Ovary (tissue), 10 donors: ENCODE measurements at regions of chr19 and their contacts with region 1.

Region 1: GRCh38 chr19:17292286-17293097 is 10.7 kb downstream of the ABHD8 start:
- DNase-seq: peak; percentile 60 to 89 (median 80)
- H3K4me3 ChIP-seq: peak overlapping the region; percentile 45
- H3K27ac ChIP-seq: peak overlapping the region in 1 of 2 donors; percentile 74
- H3K4me1 ChIP-seq: peaks cover 2% of the 10 kb centered on the region
- H3K27me3 ChIP-seq: no peaks in the 10 kb centered on the region
- CTCF ChIP-seq: peak in 2 of 3 donors; percentile 42 to 53
- EP300 ChIP-seq: no peak
- POLR2A ChIP-seq: no peak

Region 2: DNA sequence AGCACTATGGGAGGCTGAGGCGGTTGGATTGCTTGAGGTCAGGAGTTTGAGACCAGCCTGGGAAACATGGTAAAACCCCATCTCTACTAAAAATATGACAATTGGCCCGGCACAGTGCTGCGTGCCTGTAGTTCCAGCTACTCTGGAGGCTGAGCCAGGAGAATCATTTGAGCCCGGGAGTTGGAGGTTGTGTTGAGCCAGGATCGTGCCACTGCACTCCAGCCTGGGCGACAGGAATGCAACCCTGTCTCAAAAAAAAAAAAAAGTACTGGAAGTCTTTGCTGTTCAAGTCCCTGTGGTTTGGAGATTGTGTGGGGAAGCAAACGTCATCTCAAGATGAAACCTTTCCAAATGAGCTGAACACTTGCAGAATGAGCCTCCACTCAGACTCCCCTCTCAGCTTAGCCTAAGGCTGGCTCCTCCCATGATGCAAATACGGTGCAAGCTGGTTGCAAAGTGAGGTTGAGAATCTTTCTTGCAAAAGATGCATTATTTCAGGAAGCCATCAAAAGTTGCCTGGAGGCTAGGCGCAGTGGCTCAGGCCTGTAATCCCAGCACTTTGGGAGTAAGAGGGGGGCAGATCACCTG is 170.7 kb before region 1 on chr19:
- intact Hi-C with region 1: no loop called
- DNase-seq: no peak
- H3K4me3 ChIP-seq: no peak overlapping the region
- H3K27ac ChIP-seq: no peak overlapping the region
- H3K4me1 ChIP-seq: no peaks in the 10 kb centered on the region
- H3K27me3 ChIP-seq: no peaks in the 10 kb centered on the region
- CTCF ChIP-seq: no peak
- EP300 ChIP-seq: no peak
- POLR2A ChIP-seq: no peak

Region 3: GRCh38 chr19:17255150-17255621 is 37.3 kb before region 1 on chr19:
- intact Hi-C with region 1: no loop called
- DNase-seq: no peak
- H3K4me3 ChIP-seq: no peak overlapping the region
- H3K27ac ChIP-seq: no peak overlapping the region
- H3K4me1 ChIP-seq: no peaks in the 10 kb centered on the region
- H3K27me3 ChIP-seq: no peaks in the 10 kb centered on the region
- CTCF ChIP-seq: no peak
- EP300 ChIP-seq: no peak
- POLR2A ChIP-seq: no peak

Region 4: GRCh38 chr19:17346109-17346671 is 53.7 kb after region 1 on chr19:
- intact Hi-C with region 1: loop called in 1 of 4 experiments (anchors 5 kb)
- DNase-seq: peak; percentile 63 to 87 (median 83)
- H3K4me3 ChIP-seq: no peak overlapping the region
- H3K27ac ChIP-seq: no peak overlapping the region
- H3K4me1 ChIP-seq: no peaks in the 10 kb centered on the region
- H3K27me3 ChIP-seq: no peaks in the 10 kb centered on the region
- CTCF ChIP-seq: peak; percentile 93 to 96 (median 95)
- EP300 ChIP-seq: no peak
- POLR2A ChIP-seq: no peak